ENCODE measurements at regions of chr7 and their contacts with region 1.

Region 1: GRCh38 chr7:29408841-29409243 is 154.8 kb upstream of the PRR15 start:
- DNase-seq: peak; percentile 58 to 71
- ATAC-seq: peak; percentile 79 to 86; a peak in 5 of 6 replicates
- H3K4me3 ChIP-seq: no peak overlapping the region
- H3K27ac ChIP-seq: no peak overlapping the region
- H3K4me1 ChIP-seq: 0 out of 3 replicates have a peak, but pooled peaks cover 5% of the 10 kb centered on the region
- CTCF ChIP-seq: peak; percentile 89
- EP300 ChIP-seq: no peak
- POLR2A ChIP-seq: no peak
- RAD21 ChIP-seq: peak; percentile 90 to 92

Region 2: DNA sequence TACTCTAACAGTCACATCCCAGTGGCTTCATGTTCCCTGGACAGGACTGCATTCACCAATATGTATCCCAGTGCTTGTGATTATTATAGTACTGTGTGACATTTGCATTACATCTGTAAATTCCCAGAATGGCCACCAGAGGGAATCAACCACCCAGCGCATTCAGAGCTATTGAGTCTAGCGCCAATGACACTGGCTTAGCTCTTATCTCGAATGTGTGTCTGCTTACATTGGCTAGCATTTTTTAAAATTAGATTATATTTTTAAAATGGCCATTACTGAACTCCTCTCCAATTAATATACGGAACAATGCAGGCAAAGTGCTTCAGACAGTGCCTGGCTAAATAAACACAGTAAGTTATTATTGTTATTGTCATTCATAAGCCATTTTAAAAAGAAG is 487.0 kb before region 1 on chr7:
- CTCF ChIA-PET with region 1: interaction called, 295 read pairs
- POLR2A ChIA-PET with region 1: no interaction called
- DNase-seq: peak; percentile 58 to 61
- ATAC-seq: peak; percentile 92 to 98
- H3K4me3 ChIP-seq: no peak overlapping the region
- H3K27ac ChIP-seq: no peak overlapping the region
- H3K4me1 ChIP-seq: 0 out of 3 replicates have a peak, but pooled peaks cover 2% of the 10 kb centered on the region
- CTCF ChIP-seq: peak; percentile 67
- EP300 ChIP-seq: no peak
- POLR2A ChIP-seq: no peak
- RAD21 ChIP-seq: peak; percentile 53 to 54; a peak in 4 of 5 replicates

Region 3: GRCh38 chr7:28955718-28956619 is 452.9 kb before region 1 on chr7:
- CTCF ChIA-PET with region 1: interaction called, 16 read pairs
- POLR2A ChIA-PET with region 1: no interaction called
- DNase-seq: peak; percentile 33
- ATAC-seq: peak; percentile 59 to 76
- H3K4me3 ChIP-seq: peak overlapping the region; percentile 47
- H3K27ac ChIP-seq: peak overlapping the region in 1 of 2 experiments; percentile 54; a peak in 2 of 6 replicates
- H3K4me1 ChIP-seq: peaks cover 4% of the 10 kb centered on the region; the same call in 2 of the 3 replicates
- CTCF ChIP-seq: peak; percentile 33; the same call in 1 of the 3 replicates
- EP300 ChIP-seq: no peak
- POLR2A ChIP-seq: no peak
- RAD21 ChIP-seq: peak in 1 of 2 experiments; percentile 30; a peak in 1 of 5 replicates

Region 4: DNA sequence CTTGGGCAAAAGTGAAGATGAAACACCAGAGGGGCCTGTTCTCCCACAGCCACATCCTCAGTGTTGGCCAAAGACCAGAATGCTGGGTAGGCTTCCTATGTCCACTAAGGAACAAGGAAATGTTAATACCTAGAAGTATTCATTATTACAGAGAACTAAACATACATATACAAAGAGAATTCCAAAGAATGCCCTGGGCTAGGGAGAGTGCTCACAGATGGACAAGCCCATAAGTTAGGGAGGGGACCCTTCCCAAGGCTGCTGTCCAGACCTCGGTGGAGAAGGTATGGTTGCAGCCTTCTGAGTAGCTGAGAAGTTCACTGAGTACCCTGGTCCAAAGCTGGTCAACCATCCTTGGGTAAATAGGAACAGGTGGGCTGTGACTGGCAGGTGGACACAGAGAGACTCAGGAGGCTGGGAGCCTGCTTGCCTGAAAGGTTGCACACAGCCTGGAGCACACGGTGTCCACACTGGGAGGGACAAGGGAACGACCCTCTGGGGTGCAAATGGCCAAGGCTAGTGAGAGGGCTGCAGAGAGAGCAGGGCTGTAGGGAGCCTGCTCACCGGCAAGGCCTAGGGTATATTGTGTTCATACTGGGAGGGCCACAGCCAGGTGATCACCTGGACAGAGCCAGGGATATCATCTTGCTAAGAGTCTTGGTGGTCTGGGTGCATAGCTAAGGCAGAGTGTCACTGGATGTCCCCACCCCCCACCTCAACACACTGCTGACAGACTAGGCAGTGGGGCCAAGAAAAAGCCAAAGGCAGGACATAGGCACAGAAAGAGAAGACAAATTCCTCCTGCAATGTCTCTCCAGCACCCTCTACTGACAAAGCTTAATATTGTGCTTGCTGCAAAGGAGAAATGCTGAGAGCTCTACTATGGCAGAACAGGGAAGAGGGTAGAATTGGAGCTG is 302.8 kb before region 1 on chr7:
- CTCF ChIA-PET with region 1: interaction called, 13 read pairs
- POLR2A ChIA-PET with region 1: no interaction called
- DNase-seq: peak in 1 of 2 experiments; percentile 49
- ATAC-seq: peak; percentile 90 to 91
- H3K4me3 ChIP-seq: no peak overlapping the region
- H3K27ac ChIP-seq: no peak overlapping the region
- H3K4me1 ChIP-seq: no peaks in the 10 kb centered on the region
- CTCF ChIP-seq: peak; percentile 63
- EP300 ChIP-seq: no peak
- POLR2A ChIP-seq: no peak
- RAD21 ChIP-seq: peak; percentile 59 to 74

Region 5: GRCh38 chr7:29189743-29190201 is 219.1 kb before region 1 on chr7:
- CTCF ChIA-PET with region 1: interaction called, 83 read pairs
- POLR2A ChIA-PET with region 1: no interaction called
- DNase-seq: peak; percentile 36 to 40
- ATAC-seq: peak; percentile 84 to 92
- H3K4me3 ChIP-seq: no peak overlapping the region; the same call in 2 of the 3 replicates
- H3K27ac ChIP-seq: no peak overlapping the region
- H3K4me1 ChIP-seq: no peaks in the 10 kb centered on the region; the same call in 2 of the 3 replicates
- CTCF ChIP-seq: peak; percentile 66
- EP300 ChIP-seq: no peak
- POLR2A ChIP-seq: no peak
- RAD21 ChIP-seq: peak; percentile 58 to 70

Region 6: DNA sequence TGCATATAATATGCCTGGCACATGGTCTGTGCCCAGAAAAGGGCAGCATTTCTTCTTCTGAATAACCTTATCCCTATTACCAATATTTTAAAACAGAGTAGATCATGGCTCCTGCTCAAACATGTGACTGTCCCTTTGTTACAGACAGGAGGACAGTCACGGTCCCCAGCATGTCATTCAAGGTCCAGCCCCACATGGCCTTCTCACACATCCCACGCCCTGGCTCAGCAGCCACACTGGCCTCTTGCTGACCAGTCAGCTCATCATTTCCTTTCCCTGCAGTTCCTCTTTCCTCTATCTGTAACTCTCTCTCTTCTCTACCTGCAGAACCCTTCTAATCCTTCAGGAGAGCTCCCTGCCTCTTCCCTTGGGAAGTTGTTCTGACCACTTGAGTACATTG is 46.5 kb before region 1 on chr7:
- CTCF ChIA-PET with region 1: no interaction called
- POLR2A ChIA-PET with region 1: no interaction called
- DNase-seq: no peak
- ATAC-seq: no peak
- H3K4me3 ChIP-seq: no peak overlapping the region
- H3K27ac ChIP-seq: no peak overlapping the region
- H3K4me1 ChIP-seq: no peaks in the 10 kb centered on the region
- CTCF ChIP-seq: no peak
- EP300 ChIP-seq: no peak
- POLR2A ChIP-seq: no peak
- RAD21 ChIP-seq: no peak

Region 7: GRCh38 chr7:29397398-29397797 is 11.4 kb before region 1 on chr7:
- CTCF ChIA-PET with region 1: interaction called, 15 read pairs
- POLR2A ChIA-PET with region 1: no interaction called
- DNase-seq: no peak
- ATAC-seq: no peak
- H3K4me3 ChIP-seq: no peak overlapping the region
- H3K27ac ChIP-seq: no peak overlapping the region
- H3K4me1 ChIP-seq: no peaks in the 10 kb centered on the region
- CTCF ChIP-seq: no peak
- EP300 ChIP-seq: no peak
- POLR2A ChIP-seq: no peak
- RAD21 ChIP-seq: no peak

Region 8: DNA sequence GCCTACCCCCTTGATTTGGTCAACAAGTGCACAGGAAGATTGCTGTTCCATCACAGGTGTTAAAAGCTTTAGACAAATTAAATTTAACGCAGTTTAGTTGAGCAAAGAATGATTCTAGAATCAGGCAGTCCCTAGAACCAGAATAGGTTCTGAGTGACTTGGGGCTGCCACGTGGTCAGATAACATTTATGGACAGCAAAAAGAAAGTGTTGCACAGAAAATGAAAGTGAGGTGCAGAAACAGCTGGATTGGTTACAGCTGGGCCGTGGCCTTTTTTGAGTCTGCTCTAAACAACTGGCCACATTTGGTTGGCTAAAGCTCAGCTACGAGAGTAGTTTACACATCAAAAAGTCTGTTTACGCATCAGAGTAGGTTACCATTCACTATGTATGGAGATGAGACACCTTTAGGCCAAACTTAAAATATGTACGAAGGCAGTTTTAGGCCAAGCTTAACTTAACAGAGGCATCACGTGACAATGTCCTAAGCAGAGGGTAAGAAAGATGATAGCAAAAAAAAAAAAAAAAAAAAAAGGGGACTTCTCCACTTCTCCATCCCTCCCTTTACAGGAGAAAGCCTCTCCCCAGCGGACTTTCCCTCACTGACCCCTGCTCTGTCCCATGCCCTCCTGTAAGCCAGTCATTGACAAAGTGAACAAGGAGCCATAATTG is 21.6 kb after region 1 on chr7:
- CTCF ChIA-PET with region 1: interaction called, 14 read pairs
- POLR2A ChIA-PET with region 1: no interaction called
- DNase-seq: no peak
- ATAC-seq: no peak
- H3K4me3 ChIP-seq: no peak overlapping the region
- H3K27ac ChIP-seq: no peak overlapping the region
- H3K4me1 ChIP-seq: no peaks in the 10 kb centered on the region
- CTCF ChIP-seq: no peak
- EP300 ChIP-seq: no peak
- POLR2A ChIP-seq: no peak
- RAD21 ChIP-seq: no peak

Region 9: DNA sequence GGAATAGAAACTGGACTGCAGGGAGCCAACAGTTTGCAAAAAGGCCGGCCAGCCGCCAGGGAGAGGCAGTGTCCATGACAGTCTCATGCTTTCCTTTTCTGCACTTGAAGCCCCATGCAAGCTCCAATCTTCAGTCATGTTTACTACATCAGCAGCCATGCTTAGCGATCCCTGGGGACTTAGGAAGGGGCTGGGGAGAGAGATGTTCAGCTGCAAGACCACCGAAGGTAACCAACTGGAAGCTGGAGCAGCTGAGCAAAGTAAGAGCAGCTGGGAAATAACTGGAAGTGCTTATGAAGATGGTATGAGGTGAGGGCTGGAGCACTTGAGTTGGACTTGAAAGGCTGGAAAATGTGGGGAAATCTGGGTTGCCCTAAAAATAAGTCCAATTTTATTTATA is 191.8 kb after region 1 on chr7:
- CTCF ChIA-PET with region 1: no interaction called
- POLR2A ChIA-PET with region 1: no interaction called
- DNase-seq: no peak
- ATAC-seq: no peak
- H3K4me3 ChIP-seq: no peak overlapping the region
- H3K27ac ChIP-seq: no peak overlapping the region
- H3K4me1 ChIP-seq: peaks cover 3% of the 10 kb centered on the region
- CTCF ChIP-seq: no peak
- EP300 ChIP-seq: no peak
- POLR2A ChIP-seq: no peak
- RAD21 ChIP-seq: no peak

Measured in A549 (cell line).